GM12878 (cell line): ENCODE measurements at regions of chr18 and their contacts with region 1.

Region 1: GRCh38 chr18:61322265-61322873 is 10.9 kb upstream of the CDH20 start:
- DNase-seq: no peak
- ATAC-seq: peak; percentile 99
- H3K4me3 ChIP-seq: no peak overlapping the region
- H3K27ac ChIP-seq: no peak overlapping the region
- H3K4me1 ChIP-seq: no peaks in the 10 kb centered on the region
- H3K27me3 ChIP-seq: no peaks in the 10 kb centered on the region
- CTCF ChIP-seq: peak; percentile 84 to 88 (median 87)
- EP300 ChIP-seq: no peak
- POLR2A ChIP-seq: no peak
- RAD21 ChIP-seq: peak; percentile 88

Region 2: DNA sequence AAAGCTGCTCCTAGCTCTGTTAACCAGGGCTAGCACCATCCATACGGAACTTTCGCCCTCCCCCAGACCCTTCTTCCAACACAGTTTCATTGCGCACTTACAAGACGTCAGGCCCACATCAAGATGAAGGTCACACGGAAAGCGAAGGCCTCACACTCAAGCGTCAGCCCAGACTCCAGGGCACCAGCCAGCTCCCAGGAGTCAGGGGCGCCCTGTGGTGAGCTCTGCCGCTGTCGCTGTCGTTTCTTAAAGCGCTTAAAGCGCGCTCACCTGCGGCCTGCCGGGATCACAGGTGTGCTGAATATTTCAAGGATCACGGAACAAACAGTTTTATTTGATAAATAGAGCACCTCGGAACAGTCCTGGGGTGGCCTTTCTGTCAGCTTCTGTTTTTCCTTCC is 174.0 kb after region 1 on chr18:
- CTCF ChIA-PET with region 1: interaction called, 185 read pairs
- POLR2A ChIA-PET with region 1: no interaction called
- RAD21 ChIA-PET with region 1: interaction called, 38 read pairs
- SMC1A ChIA-PET with region 1: interaction called, 4 read pairs
- in situ Hi-C with region 1: loop called (anchors 5 kb)
- intact Hi-C with region 1: no loop called
- DNase-seq: no peak
- ATAC-seq: no peak
- H3K4me3 ChIP-seq: no peak overlapping the region
- H3K27ac ChIP-seq: no peak overlapping the region
- H3K4me1 ChIP-seq: no peaks in the 10 kb centered on the region
- H3K27me3 ChIP-seq: no peaks in the 10 kb centered on the region
- CTCF ChIP-seq: no peak
- EP300 ChIP-seq: no peak
- POLR2A ChIP-seq: no peak
- RAD21 ChIP-seq: no peak

Region 3: DNA sequence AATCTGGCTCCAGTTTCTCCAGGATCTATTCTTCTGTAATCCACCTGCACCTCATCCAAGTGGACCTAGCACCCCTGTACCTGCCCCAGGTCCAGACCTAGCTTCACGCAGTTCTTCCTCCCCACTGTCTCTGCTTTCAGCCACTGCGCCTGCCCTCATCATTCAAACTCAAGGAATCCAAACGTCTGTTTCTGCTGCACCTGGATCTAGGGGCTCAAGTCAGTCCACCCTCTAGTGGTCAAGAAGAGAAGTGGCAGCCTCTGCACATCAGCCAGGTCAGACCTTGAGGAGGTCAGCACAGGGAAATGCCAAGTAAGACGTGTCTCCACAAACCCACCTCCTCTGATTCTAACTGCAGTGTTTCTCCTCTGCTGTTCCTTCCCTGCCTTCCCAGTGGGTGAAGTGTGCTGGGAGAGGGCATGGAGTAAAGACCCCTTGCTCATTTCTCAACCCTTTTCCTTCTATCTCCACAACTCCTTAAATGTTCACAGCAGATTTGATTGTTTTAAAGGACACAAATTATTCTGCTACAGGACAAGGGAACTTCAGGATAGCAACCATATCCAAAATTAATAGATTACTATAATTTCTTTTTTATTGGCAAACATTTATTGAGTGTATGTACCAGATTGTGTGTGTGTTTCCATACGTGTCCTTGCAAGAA is 579.1 kb after region 1 on chr18:
- CTCF ChIA-PET with region 1: no interaction called
- POLR2A ChIA-PET with region 1: no interaction called
- RAD21 ChIA-PET with region 1: no interaction called
- SMC1A ChIA-PET with region 1: no interaction called
- in situ Hi-C with region 1: no loop called
- intact Hi-C with region 1: loop called (anchors 2 kb)
- DNase-seq: peak; percentile 7
- ATAC-seq: peak; percentile 99
- H3K4me3 ChIP-seq: no peak overlapping the region
- H3K27ac ChIP-seq: no peak overlapping the region
- H3K4me1 ChIP-seq: no peaks in the 10 kb centered on the region
- H3K27me3 ChIP-seq: no peaks in the 10 kb centered on the region; a peak in 2 of 4 replicates
- CTCF ChIP-seq: peak; percentile 87 to 99 (median 95)
- EP300 ChIP-seq: no peak
- POLR2A ChIP-seq: no peak
- RAD21 ChIP-seq: peak; percentile 72